A549 (cell line): ENCODE measurements at regions of chr3 and their contacts with region 1.

Region 1: GRCh38 chr3:11335056-11335608 is 62.9 kb downstream of the ATG7 start:
- DNase-seq: peak; percentile 55 to 66
- ATAC-seq: peak; percentile 93 to 94
- H3K4me3 ChIP-seq: no peak overlapping the region
- H3K27ac ChIP-seq: 0 out of 6 replicates have a peak overlapping the region, but pooled peaks of 1 of the 2 experiments have one; percentile 7
- H3K4me1 ChIP-seq: no peaks in the 10 kb centered on the region; the same call in 2 of the 3 replicates
- CTCF ChIP-seq: peak; percentile 86
- EP300 ChIP-seq: no peak
- POLR2A ChIP-seq: no peak
- RAD21 ChIP-seq: peak; percentile 80 to 85

Region 2: GRCh38 chr3:10945683-10946287 is 389.3 kb before region 1 on chr3:
- CTCF ChIA-PET with region 1: interaction called, 10 read pairs
- POLR2A ChIA-PET with region 1: no interaction called
- DNase-seq: peak; percentile 53 to 75
- ATAC-seq: peak; percentile 81 to 96
- H3K4me3 ChIP-seq: no peak overlapping the region
- H3K27ac ChIP-seq: no peak overlapping the region
- H3K4me1 ChIP-seq: no peaks in the 10 kb centered on the region
- CTCF ChIP-seq: peak; percentile 65
- EP300 ChIP-seq: no peak
- POLR2A ChIP-seq: no peak
- RAD21 ChIP-seq: peak; percentile 63 to 74

Region 3: DNA sequence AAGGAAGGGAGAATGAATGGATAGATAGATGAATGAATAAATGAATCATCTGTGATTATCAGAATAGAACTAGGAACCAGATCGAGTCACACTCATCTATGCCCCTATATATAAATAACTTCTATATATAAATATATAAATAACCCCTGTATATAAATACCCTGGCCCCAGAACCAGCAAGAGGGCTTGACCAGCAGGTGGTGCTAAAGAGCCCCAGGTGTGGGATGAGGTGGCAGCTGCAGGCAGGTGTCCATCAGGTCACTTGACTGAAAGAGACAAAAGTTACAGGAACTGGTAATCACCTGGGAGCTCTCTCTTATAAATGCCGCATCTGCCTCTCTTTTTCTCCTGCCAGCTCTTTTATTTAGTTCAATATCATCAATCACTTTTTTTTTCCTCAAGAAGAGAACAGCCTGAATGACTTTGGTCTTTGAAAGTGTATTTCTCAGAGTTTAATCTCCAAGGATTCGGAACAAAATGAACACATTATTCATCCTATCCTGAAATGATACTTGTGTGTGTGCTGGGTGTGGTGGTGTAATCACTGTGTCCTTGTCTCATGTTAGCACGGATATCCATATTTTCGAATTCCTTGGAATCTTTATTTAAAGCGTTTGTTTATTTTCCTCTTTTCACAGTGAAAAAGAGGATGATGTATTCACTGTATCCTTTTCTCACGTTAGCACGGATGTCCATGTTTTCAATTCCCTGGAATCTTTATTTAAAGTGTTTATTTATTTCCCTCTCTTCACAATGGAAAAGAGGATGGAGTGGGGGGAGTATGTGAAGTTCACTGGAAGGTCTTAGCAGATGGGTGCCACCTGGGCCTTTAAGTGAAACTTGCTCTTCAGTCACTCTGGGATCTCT is 98.3 kb before region 1 on chr3:
- CTCF ChIA-PET with region 1: interaction called, 86 read pairs
- POLR2A ChIA-PET with region 1: no interaction called
- DNase-seq: peak; percentile 60 to 63
- ATAC-seq: peak; percentile 80 to 88; a peak in 5 of 6 replicates
- H3K4me3 ChIP-seq: no peak overlapping the region
- H3K27ac ChIP-seq: no peak overlapping the region
- H3K4me1 ChIP-seq: no peaks in the 10 kb centered on the region
- CTCF ChIP-seq: peak; percentile 91
- EP300 ChIP-seq: no peak
- POLR2A ChIP-seq: no peak
- RAD21 ChIP-seq: peak; percentile 71 to 74

Region 4: DNA sequence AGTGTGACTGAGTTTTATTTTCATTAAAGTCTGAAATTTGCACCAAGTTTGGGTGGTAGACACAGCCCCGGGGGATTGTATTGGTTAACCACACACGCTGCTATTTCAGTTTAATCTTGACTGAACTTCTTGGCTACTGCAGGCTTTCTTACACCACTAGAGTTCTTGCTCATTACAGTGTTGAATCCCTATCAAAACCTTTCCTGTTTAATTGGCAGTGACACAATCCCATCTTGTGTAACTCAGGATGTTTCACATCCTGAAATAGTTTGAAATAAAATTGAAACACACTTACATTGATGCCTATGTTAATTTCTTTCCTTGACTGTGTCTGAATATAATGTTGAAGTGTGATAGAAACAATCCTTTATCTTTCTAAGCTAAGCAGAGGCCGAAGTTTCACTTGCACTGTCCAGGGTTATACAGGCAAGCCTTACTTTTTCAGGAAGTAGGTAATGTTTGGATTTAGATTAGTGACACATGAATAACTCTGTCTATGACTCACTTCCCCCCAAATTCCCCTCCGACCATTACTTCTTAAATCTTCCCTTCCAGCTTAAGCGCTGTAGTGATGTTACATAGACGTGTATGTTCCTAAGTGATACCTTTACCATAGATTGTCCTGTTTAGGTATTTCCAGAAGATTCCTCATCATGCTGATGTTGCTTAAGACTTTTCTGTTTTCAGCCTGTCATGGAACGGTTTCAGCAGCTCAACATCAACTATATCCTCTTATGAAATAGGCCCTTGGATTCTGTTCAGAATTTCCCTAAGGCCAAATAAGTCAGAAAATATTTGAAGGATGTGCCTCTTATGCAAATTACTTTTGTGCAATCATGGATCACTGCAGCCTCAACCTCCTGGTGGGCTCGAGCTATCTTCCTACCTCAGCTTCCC is 46.1 kb before region 1 on chr3:
- CTCF ChIA-PET with region 1: interaction called, 12 read pairs
- POLR2A ChIA-PET with region 1: interaction called, 3 read pairs
- DNase-seq: peak; percentile 64 to 79
- ATAC-seq: peak; percentile 91 to 94
- H3K4me3 ChIP-seq: peak overlapping the region; percentile 6; the same call in 1 of the 3 replicates
- H3K27ac ChIP-seq: peak overlapping the region; percentile 73 to 85
- H3K4me1 ChIP-seq: peaks cover 46% of the 10 kb centered on the region
- CTCF ChIP-seq: no peak
- EP300 ChIP-seq: peak in 1 of 2 experiments; percentile 50; a peak in 2 of 5 replicates
- POLR2A ChIP-seq: no peak
- RAD21 ChIP-seq: no peak

Region 5: DNA sequence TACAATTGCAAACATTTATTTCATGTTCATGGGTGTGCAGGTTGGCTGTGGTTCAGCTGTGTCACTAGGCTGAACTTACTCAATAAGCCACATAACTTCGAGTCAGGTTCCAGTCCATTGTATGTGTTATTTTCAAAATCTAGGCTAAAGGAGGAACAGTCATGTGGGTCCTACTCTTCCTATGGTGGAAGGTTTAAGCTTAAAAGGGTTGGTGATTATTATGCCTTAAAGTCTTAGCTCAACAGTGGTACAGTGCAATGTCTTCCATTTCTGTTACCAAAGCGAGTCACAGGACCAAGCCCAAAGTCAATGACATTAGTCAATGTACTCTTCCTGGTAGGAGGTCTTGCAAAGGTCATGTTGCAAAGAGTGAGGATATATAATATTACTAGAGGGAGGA is 15.2 kb after region 1 on chr3:
- CTCF ChIA-PET with region 1: interaction called, 33 read pairs
- POLR2A ChIA-PET with region 1: no interaction called
- DNase-seq: peak in 1 of 2 experiments; percentile 16
- ATAC-seq: no peak
- H3K4me3 ChIP-seq: no peak overlapping the region
- H3K27ac ChIP-seq: no peak overlapping the region
- H3K4me1 ChIP-seq: peaks cover 9% of the 10 kb centered on the region; the same call in 2 of the 3 replicates
- CTCF ChIP-seq: no peak
- EP300 ChIP-seq: no peak
- POLR2A ChIP-seq: no peak
- RAD21 ChIP-seq: no peak

Region 6: GRCh38 chr3:11791339-11792128 is 456.4 kb after region 1 on chr3:
- CTCF ChIA-PET with region 1: no interaction called
- POLR2A ChIA-PET with region 1: no interaction called
- DNase-seq: no peak
- ATAC-seq: no peak
- H3K4me3 ChIP-seq: no peak overlapping the region
- H3K27ac ChIP-seq: no peak overlapping the region
- H3K4me1 ChIP-seq: no peaks in the 10 kb centered on the region
- CTCF ChIP-seq: no peak
- EP300 ChIP-seq: no peak
- POLR2A ChIP-seq: no peak
- RAD21 ChIP-seq: no peak